ENCODE measurements at regions of chr3 and their contacts with region 1.

Region 1: DNA sequence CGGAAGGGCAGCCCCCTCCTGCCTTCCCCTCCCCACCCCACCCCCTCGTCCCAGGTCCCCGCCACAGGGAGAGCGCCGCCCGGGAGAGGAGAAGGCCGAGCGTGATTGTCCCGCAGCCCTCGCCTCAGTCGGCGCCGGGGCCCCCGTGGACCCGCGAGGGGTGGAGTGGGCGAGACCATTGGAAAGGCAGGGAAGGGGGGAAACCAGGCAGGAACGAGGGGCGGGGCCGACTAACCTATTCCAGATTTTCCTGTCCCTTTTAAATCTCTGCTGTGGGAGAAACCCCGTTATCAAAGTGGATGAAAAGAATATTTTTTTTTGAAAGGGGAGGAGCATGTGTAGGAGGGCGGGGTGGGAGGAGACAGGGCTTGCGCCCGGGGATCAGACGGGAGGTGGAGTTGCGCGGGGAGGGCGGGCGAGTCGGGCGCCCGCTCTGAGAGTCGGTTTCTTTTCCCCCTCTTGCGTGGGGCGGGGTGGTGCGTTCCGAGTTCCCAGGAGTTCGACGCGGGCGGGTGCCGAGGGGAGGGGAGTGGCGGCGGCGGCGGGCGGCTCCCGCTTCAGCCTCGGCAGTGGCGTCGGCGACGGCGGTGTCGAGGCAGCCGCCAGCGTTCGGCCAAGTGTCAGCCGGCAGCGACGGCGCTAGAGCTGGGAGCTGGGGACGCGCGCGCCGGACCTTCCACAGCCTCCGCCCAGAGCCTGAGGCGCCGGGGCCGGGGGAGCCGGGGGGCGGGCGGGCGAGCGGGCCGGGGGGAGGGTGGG is at the start of gene NECTIN3:
- DNase-seq: peak; percentile 49 to 94
- H3K4me3 ChIP-seq: peak within 1 kb of the TSS; percentile 50
- H3K27ac ChIP-seq: no peak within 1 kb of the TSS
- H3K4me1 ChIP-seq: peaks cover 18% of the 10 kb centered on the region
- H3K27me3 ChIP-seq: peaks cover 31% of the 10 kb centered on the region
- CTCF ChIP-seq: no peak
- total RNA-seq, gene NECTIN3: 11.9 and 14.0 TPM in 2 replicates

Region 2: GRCh38 chr3:109927161-109927560 is 1144.3 kb before region 1 on chr3:
- CTCF ChIA-PET with region 1: no interaction called
- POLR2A ChIA-PET with region 1: no interaction called
- intact Hi-C with region 1: loop called (anchors 5 kb)
- DNase-seq: peak; percentile 71 to 98
- H3K4me3 ChIP-seq: no peak overlapping the region
- H3K27ac ChIP-seq: peak overlapping the region; percentile 93
- H3K4me1 ChIP-seq: peaks cover 32% of the 10 kb centered on the region
- H3K27me3 ChIP-seq: no peaks in the 10 kb centered on the region
- CTCF ChIP-seq: no peak

Region 3: DNA sequence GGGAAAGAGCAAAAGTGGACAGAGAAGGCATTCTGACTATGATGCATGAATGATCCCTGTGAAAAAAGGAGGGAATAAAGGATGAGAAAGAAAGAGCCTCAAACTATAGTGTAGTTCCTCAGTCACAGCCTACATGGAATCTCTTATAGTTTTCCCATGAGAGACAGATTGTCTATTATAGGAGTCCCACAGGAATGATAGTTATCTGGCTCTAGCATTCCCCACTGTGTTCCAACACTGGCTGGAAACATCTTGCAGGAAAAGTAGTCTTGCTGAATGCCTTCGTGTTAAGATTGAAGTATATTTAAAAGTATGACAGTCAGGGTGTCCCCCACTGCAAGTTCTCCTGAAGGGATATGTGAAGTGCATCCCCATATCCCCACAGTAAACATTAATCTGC is 641.3 kb before region 1 on chr3:
- CTCF ChIA-PET with region 1: no interaction called
- POLR2A ChIA-PET with region 1: no interaction called
- intact Hi-C with region 1: loop called (anchors 10 kb)
- DNase-seq: no peak
- H3K4me3 ChIP-seq: no peak overlapping the region
- H3K27ac ChIP-seq: no peak overlapping the region
- H3K4me1 ChIP-seq: no peaks in the 10 kb centered on the region
- H3K27me3 ChIP-seq: no peaks in the 10 kb centered on the region
- CTCF ChIP-seq: no peak

Region 4: DNA sequence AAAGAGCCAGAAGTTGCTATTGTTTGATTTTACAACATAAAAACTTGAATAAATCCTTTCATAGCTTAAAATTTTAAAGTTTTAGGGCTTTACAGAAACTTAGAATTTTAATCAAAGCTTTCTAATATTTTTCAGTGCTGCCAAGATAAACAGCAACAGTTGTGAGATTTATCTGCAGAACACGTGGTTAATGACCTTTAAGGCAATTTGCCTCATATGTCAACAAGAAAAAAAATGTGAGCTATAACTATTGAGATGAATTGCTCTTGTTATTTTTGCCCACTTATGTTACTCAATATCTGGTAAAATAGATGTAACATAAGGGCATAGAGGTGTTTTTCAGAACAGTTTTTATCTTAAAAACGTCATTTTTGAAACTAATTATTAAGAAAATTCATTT is 96.5 kb before region 1 on chr3:
- CTCF ChIA-PET with region 1: no interaction called
- POLR2A ChIA-PET with region 1: no interaction called
- intact Hi-C with region 1: no loop called
- DNase-seq: no peak
- H3K4me3 ChIP-seq: no peak overlapping the region
- H3K27ac ChIP-seq: no peak overlapping the region
- H3K4me1 ChIP-seq: no peaks in the 10 kb centered on the region
- H3K27me3 ChIP-seq: no peaks in the 10 kb centered on the region
- CTCF ChIP-seq: no peak

Region 5: GRCh38 chr3:111194048-111194447 is 122.6 kb after region 1 on chr3:
- CTCF ChIA-PET with region 1: no interaction called
- POLR2A ChIA-PET with region 1: no interaction called
- intact Hi-C with region 1: no loop called
- DNase-seq: no peak
- H3K4me3 ChIP-seq: no peak overlapping the region
- H3K27ac ChIP-seq: no peak overlapping the region
- H3K4me1 ChIP-seq: no peaks in the 10 kb centered on the region
- H3K27me3 ChIP-seq: no peaks in the 10 kb centered on the region
- CTCF ChIP-seq: no peak

Region 6: GRCh38 chr3:111338059-111338698 is 266.7 kb after region 1 on chr3:
- CTCF ChIA-PET with region 1: interaction called, 16 read pairs
- POLR2A ChIA-PET with region 1: no interaction called
- intact Hi-C with region 1: loop called (anchors 2 kb)
- DNase-seq: peak in 1 of 2 experiments; percentile 66
- H3K4me3 ChIP-seq: no peak overlapping the region
- H3K27ac ChIP-seq: no peak overlapping the region
- H3K4me1 ChIP-seq: no peaks in the 10 kb centered on the region
- H3K27me3 ChIP-seq: no peaks in the 10 kb centered on the region
- CTCF ChIP-seq: peak; percentile 90

Region 7: GRCh38 chr3:111676211-111677006 is 605.0 kb after region 1 on chr3:
- CTCF ChIA-PET with region 1: no interaction called
- POLR2A ChIA-PET with region 1: no interaction called
- intact Hi-C with region 1: loop called (anchors 5 kb)
- DNase-seq: peak; percentile 92 to 100
- H3K4me3 ChIP-seq: peak overlapping the region; percentile 62
- H3K27ac ChIP-seq: peak overlapping the region; percentile 83
- H3K4me1 ChIP-seq: peaks cover 44% of the 10 kb centered on the region
- H3K27me3 ChIP-seq: no peaks in the 10 kb centered on the region
- CTCF ChIP-seq: no peak

Region 8: DNA sequence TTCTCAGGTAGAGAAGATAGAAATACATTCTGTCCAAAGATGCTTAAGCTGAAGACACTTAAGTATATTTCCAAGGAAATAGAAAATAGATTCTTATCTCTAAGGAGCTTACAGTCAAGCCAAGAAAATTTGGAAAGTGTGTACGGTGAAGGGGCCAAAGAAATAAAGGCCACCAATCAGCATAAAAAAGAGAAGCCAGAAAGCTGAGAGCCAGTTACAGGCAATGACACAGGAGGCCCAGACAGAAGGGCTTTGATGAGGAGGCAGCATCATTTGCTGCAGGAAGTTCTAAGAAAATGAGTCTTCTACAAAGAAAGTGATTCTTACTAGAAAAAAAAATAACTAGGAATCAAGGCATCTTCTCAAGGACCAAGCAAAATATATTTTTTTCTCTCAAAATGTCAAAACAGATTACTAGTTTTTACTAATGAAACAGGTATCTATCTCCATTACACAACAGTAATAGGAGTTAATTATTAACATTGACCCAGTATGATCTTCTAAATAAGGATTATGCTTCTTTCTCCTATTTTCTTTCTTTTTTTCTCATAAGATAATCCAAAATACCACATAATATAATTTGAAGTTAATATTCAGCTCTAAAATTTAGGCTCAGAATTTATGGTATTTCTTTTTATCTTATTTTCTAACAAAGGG is 705.5 kb after region 1 on chr3:
- CTCF ChIA-PET with region 1: no interaction called
- POLR2A ChIA-PET with region 1: no interaction called
- intact Hi-C with region 1: no loop called
- DNase-seq: no peak
- H3K4me3 ChIP-seq: no peak overlapping the region
- H3K27ac ChIP-seq: no peak overlapping the region
- H3K4me1 ChIP-seq: peaks cover 7% of the 10 kb centered on the region; the same call in 1 of the 2 replicates
- H3K27me3 ChIP-seq: no peaks in the 10 kb centered on the region
- CTCF ChIP-seq: no peak